ENCODE measurements at regions of chr16 and their contacts with region 1.

Region 1: DNA sequence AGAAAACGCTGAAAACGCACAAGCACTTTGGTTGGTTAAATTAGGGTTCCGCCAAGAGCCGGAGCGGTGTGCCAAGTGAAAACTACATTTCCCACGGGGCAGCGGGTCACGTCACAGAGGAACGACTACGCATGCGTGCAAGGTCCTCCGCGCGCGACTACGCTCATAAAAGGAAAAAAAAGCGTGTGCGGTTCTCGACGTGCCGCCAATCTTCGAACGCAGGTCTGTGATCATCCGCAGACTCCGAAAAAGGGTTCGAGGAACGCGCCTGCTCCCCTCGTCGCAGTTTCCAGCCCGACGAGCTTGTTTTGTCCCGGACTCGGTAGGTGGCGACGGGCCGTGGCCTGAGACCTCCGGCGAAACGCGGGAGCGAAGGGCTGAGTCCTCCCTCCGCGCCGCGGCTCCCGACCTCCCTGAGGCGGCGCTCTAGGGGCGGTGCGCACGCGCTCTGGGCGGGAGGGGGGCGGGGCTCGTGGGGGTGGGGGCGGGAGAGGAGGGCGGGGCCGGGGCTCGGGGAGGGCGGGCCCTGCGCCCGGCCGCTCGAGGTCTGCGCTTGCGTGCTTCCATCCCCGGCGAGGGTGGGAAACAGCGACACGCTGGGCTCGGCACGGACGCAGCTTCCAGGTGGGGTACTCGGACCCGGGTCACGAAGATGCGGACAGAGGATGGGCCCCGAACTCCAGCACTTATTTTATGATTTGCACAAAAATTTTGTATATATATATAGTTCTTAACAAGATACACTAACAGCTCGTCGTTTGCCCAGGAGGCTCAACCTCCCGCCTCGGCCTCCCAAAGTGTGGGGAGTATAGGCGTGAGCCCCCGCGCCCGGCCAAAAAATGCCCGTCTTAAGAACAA is at the start of gene SGF29:
- DNase-seq: peak; percentile 95
- H3K4me3 ChIP-seq: peak within 1 kb of the TSS; percentile 67 to 70
- H3K27ac ChIP-seq: peak within 1 kb of the TSS; percentile 99 to 100
- H3K4me1 ChIP-seq: peaks cover 0 to 3% of the 10 kb centered on the region in 2 donors
- H3K27me3 ChIP-seq: no peaks in the 10 kb centered on the region
- CTCF ChIP-seq: peak in 3 of 4 experiments; percentile 26 to 55 (median 38)
- POLR2A ChIP-seq: peak; percentile 92 to 98
- total RNA-seq, gene SGF29: 13.2 to 45.3 (median 29.1) TPM

Region 2: GRCh38 chr16:28491970-28492474 is 62.0 kb before region 1 on chr16 and contains the start of gene CLN3:
- intact Hi-C with region 1: loop called (anchors 10 kb)
- DNase-seq: peak; percentile 88 to 94
- H3K4me3 ChIP-seq: peak within 1 kb of the TSS; percentile 95 to 97
- H3K27ac ChIP-seq: peak within 1 kb of the TSS; percentile 97 to 99
- H3K4me1 ChIP-seq: no peaks in the 10 kb centered on the region
- H3K27me3 ChIP-seq: no peaks in the 10 kb centered on the region
- CTCF ChIP-seq: peak in 2 of 4 experiments; percentile 8 to 18
- POLR2A ChIP-seq: peak in 1 of 2 donors; percentile 41
- total RNA-seq, gene CLN3: 13.8 to 23.7 (median 18.3) TPM